ENCODE measurements at regions of chr2 and their contacts with region 1.

Region 1: DNA sequence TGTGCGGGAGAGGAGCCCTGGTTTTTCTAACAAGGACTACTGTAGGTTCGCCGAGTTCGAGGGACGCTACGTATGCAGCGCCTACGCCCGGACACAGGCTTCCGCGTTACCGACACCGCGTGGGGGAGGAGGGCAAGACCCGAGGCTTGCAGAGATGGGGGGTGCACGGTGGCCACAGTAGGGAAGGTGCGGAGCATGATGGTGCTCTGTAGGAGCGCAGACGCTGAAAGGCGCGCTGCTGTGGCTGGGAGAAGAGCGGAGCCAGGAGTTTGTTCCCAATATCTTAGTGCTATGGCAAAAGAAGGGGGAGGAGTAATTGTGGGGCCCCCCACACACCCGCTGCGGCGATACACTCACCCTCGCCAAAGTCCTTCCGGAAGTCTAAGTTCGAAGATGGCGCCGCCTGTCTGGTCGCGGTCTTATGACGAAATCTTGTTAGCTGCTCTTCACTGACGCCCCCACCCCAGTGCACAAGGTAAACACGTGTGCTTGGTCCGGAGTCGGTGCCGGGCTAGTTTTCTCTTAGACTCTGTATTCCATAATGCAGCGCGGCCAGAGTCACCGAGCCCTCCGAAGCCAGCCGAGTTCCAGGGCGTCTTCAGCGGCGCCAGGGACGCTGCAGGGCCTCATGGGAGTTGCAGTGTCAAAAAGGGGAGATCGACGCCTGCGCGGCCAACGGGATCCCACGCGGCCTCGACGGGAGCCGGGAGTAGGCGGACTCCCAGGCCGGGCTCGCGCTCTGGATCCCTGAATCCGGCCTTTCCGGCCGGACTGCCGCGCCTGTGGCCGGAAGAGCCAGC is at the start of gene GTF3C2:
- DNase-seq: peak; percentile 90

Region 2: GRCh38 chr2:27123302-27124231 is 233.0 kb before region 1 on chr2 and contains the start of gene ABHD1:
- CTCF ChIA-PET with region 1: no interaction called
- POLR2A ChIA-PET with region 1: no interaction called
- DNase-seq: peak; percentile 62

Region 3: GRCh38 chr2:27322766-27323595 is 33.6 kb before region 1 on chr2 and contains the start of gene MPV17:
- CTCF ChIA-PET with region 1: no interaction called
- POLR2A ChIA-PET with region 1: interaction called, 13 read pairs
- DNase-seq: peak; percentile 95

Region 4: DNA sequence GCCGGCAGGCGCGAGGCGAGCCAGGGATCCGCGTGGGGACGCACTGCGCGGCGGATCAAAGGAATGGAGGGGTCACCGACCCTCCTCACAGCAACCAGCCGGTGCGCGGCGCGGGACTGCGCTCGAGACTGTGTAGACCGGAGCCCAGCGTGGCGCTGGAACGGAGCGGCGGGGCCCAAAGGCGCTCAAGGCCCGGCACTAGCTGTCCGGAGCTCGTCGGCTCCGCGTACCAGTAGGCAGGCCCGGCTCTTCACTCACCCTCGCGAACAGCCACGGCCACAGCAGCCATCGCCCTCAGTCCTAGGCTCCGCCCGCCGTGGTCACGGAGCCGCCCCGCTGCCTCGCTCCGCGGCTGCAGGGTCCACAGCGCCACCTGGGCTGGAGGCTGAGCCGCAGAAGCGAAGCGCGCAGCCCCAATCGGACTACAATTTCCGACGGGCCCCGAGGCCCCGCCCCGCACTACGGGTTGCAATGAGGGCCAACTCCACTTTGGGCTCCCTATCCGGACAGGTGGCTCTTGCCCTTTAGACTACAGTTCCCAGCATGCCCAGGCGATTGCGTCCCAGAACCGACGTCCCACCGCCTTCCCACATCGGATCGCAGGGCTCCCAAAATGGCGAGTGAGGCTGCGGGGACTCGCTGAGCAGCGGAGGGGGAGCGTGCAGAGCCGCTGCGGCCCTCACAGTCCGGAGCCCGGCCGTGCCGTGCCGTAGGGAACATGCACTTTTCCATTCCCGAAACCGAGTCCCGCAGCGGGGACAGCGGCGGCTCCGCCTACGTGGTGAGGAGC is 13.6 kb after region 1 on chr2 and contains the starts of genes EIF2B4 and SNX17:
- CTCF ChIA-PET with region 1: no interaction called
- POLR2A ChIA-PET with region 1: interaction called, 25 read pairs
- DNase-seq: peak; percentile 93

Region 5: GRCh38 chr2:27380626-27381545 is 24.3 kb after region 1 on chr2 and contains the start of gene ZNF513:
- CTCF ChIA-PET with region 1: no interaction called
- POLR2A ChIA-PET with region 1: interaction called, 10 read pairs
- DNase-seq: peak; percentile 91

Region 6: DNA sequence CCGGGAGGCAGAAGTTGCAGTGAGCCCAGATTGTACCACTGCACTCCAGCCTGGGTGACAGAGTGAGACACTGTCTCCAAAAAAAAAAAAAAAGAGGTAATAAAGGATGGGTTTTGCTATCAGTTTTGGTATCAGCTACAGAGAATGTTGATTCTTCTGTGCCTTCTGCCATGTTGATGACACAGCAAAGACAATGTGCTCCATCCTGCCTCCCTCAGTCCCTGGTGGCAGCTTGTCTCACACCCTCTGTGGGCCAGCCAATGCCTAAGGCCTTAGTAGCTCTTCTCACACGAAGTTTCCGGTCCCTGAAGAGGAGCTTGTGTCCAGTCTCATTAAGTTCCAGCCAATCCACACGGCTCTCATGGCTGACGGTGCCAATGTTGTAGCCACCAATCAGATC is 115.4 kb after region 1 on chr2:
- CTCF ChIA-PET with region 1: no interaction called
- POLR2A ChIA-PET with region 1: no interaction called
- DNase-seq: no peak

Measured in HEK293T (cell line).